Activated B cell treated with CpG ODN at 0.5 μM for 24 hours (primary cell): ENCODE measurements at regions of chr17 and their contacts with region 1.

Region 1: DNA sequence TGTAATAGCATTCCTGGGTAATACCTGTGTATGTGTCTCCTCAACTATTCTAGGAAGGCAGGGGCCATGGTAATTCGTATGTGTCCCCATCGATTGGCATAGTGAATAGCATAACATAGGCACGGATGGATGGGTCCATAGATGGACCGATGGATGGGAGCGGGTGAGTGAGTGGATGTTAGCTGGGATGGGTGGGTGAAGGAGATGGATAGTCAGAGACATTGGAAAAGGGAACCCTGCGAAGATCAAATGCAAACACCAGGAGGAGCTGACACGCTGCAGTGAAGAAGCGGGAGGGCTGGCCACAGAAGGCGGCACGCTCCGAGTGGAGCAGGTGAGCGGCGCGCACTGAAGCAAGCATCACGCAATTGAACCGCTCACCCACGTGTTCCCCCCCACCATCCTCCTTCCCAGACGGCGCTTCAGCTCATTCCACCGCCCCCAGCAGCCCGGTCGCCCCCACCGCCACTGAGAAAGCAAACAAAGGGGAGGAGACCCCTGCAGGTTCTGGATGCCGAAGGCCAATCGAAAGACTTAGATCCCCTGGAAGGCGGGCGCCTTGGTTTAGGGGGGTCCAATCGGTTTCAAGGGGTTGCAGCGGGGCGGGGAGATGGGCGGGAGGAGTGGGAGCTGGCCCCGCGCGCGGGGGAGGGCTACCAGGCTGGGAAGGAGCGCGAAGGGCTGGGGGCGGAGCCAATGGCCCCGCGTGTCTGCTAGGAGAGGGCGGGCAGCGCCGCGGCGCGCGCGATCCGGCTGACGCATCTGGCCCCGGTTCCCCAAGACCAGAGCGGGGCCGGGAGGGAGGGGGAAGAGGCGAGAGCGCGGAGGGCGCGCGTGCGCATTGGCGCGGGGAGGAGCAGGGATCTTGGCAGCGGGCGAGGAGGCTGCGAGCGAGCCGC is at the start of gene ARRB2:
- DNase-seq: peak; percentile 93
- ATAC-seq: peak; percentile 87
- H3K4me3 Mint-ChIP-seq: peak within 1 kb of the TSS; percentile 86
- H3K27ac Mint-ChIP-seq: peak within 1 kb of the TSS; percentile 83
- H3K4me1 Mint-ChIP-seq: peaks cover 43% of the 10 kb centered on the region
- H3K27me3 Mint-ChIP-seq: no peaks in the 10 kb centered on the region
- CTCF ChIP-seq: peak; percentile 27
- total RNA-seq, gene ARRB2: 45.1 and 52.0 TPM in 2 replicates

Region 2: GRCh38 chr17:4696437-4696805 is 13.6 kb before region 1 on chr17:
- CTCF ChIA-PET with region 1: no interaction called
- POLR2A ChIA-PET with region 1: no interaction called
- intact Hi-C with region 1: no loop called
- DNase-seq: no peak
- ATAC-seq: peak; percentile 21
- H3K4me3 Mint-ChIP-seq: no peak overlapping the region
- H3K27ac Mint-ChIP-seq: peak overlapping the region; percentile 77
- H3K4me1 Mint-ChIP-seq: peaks cover 15% of the 10 kb centered on the region
- H3K27me3 Mint-ChIP-seq: no peaks in the 10 kb centered on the region
- CTCF ChIP-seq: no peak

Region 3: DNA sequence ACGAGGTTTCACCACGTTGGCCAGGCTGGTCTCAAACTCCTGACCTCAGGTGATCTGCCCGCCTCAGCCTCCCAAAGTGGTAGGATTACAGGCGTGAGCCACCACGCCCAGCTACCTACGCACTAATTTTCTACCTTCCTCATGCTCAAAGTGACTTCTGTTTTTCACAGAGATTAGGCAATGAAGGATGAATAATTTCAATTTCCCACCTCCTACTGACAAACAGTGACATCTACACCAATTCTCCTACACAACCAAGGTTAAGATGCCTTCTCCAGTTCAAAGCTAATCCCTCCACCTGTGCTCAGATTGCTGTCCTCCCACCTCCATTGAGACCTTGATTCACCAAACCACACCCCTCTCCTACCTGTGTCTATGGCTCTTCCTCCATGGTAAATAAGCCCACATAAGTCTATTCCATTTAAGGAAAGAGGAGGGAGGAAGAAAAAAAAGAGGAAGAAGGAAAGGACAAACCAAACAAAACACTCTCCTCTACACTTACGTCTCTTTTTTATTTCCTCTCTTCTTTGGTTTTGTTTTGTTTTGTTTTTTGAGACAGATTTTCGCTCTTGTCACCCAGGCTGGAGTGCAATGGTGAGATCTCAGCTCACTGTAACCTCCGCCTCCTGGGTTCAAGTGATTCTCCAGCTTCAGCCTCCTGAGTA is 15.7 kb after region 1 on chr17:
- CTCF ChIA-PET with region 1: interaction called, 3 read pairs
- POLR2A ChIA-PET with region 1: interaction called, 11 read pairs
- intact Hi-C with region 1: no loop called
- DNase-seq: no peak
- ATAC-seq: no peak
- H3K4me3 Mint-ChIP-seq: no peak overlapping the region
- H3K27ac Mint-ChIP-seq: peak overlapping the region; percentile 16
- H3K4me1 Mint-ChIP-seq: peaks cover 9% of the 10 kb centered on the region
- H3K27me3 Mint-ChIP-seq: no peaks in the 10 kb centered on the region
- CTCF ChIP-seq: no peak

Region 4: DNA sequence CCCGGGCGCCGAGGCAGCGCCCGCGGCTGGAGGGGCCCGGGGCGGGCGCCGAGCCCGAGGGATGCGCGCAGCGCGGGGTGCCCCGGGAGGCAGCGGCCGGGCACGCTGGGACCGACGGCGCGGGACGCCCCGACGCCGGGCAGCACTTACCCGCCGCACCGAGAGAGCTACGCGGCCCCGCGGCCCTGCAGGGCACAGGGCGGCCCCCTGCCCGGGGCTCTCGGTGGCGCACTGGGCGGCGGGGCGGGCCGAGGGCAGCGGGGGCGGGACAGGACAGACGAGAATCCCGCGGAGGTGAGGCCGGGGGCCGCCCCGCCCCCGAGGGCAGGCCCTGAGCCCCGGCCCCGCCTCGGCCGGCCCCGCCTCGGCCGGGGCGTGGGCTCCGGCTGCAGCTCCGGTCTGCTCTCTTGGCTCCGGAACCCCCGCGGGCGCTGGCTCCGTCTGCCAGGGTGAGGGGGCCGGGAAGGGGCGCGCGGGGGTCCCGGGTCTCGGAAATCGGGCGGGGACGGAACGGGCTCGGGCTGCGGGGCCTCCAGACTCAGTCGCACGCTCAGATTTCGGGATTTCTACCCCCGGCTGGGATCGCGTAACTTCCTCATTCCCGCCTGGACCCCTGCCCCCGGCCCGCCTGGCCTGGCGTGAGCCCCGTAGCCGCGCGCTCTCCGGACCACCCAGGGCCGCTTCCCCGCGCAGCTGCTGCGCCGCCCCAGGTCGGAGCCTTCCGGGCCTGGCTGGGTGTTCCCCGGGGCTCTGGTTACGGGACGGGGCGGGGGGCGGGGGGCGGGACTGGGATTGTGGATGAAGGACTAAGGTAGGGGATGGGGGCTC is 96.9 kb after region 1 on chr17 and contains the start of gene PLD2:
- CTCF ChIA-PET with region 1: no interaction called
- POLR2A ChIA-PET with region 1: interaction called, 6 read pairs
- intact Hi-C with region 1: loop called (anchors 2 kb)
- DNase-seq: peak; percentile 90
- ATAC-seq: peak; percentile 99
- H3K4me3 Mint-ChIP-seq: peak within 1 kb of the TSS; percentile 83
- H3K27ac Mint-ChIP-seq: peak within 1 kb of the TSS; percentile 56
- H3K4me1 Mint-ChIP-seq: peaks cover 17% of the 10 kb centered on the region
- H3K27me3 Mint-ChIP-seq: no peaks in the 10 kb centered on the region
- CTCF ChIP-seq: no peak
- total RNA-seq, gene PLD2: 49.9 and 54.3 TPM in 2 replicates

Region 5: GRCh38 chr17:4891411-4892342 is 181.6 kb after region 1 on chr17:
- CTCF ChIA-PET with region 1: interaction called, 5 read pairs
- POLR2A ChIA-PET with region 1: no interaction called
- intact Hi-C with region 1: loop called (anchors 1 kb)
- DNase-seq: no peak
- ATAC-seq: no peak
- H3K4me3 Mint-ChIP-seq: no peak overlapping the region
- H3K27ac Mint-ChIP-seq: no peak overlapping the region
- H3K4me1 Mint-ChIP-seq: peaks cover 4% of the 10 kb centered on the region
- H3K27me3 Mint-ChIP-seq: no peaks in the 10 kb centered on the region
- CTCF ChIP-seq: no peak

Region 6: DNA sequence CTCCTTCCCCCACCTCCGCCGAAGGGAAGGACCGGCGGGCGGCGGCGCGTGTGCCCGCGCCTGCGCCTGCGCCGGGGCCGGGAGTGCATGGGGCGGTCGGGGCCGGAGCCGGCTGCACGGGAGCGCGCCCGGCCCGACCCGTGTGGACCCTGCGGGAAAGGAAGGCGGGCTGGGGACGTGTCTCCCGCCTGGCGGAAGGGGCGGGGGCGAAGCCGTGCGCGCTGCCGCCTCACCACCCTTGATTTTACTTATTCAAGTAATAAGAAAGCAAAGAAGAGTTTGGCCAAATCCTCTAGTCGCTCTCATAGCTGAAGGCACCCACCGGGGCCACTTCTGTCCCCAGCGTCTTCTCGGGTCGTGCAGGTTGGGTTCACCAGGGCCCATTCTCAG is 238.9 kb after region 1 on chr17:
- CTCF ChIA-PET with region 1: no interaction called
- POLR2A ChIA-PET with region 1: interaction called, 9 read pairs
- intact Hi-C with region 1: loop called (anchors 2 kb)
- DNase-seq: peak; percentile 74
- ATAC-seq: peak; percentile 45
- H3K4me3 Mint-ChIP-seq: peak overlapping the region; percentile 100
- H3K27ac Mint-ChIP-seq: peak overlapping the region; percentile 100
- H3K4me1 Mint-ChIP-seq: peaks cover 44% of the 10 kb centered on the region
- H3K27me3 Mint-ChIP-seq: peaks cover 2% of the 10 kb centered on the region
- CTCF ChIP-seq: no peak